Activated CD8-positive, alpha-beta memory T cell treated with anti-CD3 and anti-CD28 coated beads, Interleukin-2, amount 10 ng/mL, durations not matched to agents 7 days and 5 days (primary cell): ENCODE measurements at regions of chr10 and their contacts with region 1.

Region 1: DNA sequence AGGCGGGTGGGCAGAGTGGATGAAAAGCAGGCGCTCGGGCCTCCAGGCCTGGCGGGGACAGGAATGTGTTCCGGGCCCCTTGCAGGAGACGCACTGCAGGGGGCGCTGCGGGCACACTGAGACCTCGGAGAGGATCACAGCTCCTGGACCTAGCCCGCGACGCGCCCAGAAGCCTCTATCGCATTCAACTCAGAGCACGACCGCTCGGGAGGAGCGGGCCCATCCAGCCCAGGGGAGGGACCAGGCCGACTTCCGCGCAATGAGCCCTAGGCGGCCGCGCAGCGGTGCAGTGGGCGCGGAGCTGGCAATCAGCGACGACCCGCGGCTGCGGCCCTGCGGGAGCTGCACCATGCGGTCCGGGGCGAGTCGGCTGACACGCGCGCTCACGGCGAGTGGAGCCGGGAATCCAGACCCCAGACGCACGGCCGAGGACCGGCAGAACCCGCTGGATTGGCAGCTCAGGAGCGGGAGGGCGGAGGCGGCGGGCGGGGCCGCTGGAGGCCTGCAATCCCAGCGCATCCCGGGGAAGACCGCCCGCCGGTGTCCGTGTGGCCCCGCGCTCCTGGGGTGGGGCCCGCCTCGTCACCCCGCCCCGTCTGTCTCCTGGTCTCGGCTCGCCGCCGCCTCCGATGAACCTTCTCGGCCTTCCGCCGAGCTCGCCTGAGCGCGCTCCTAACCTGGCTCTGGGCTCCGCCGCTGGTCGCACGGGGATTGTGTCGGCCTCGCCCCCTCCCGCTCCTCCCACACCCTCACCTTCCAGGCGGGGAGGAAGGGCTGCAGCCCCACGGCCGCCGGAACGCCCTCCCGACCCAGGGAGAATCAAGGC is 33.5 kb upstream of the GRID1 start:
- DNase-seq: peak; percentile 97
- ATAC-seq: peak; percentile 95
- H3K4me3 Mint-ChIP-seq: peak overlapping the region; percentile 79
- H3K27ac Mint-ChIP-seq: peak overlapping the region; percentile 85
- H3K4me1 Mint-ChIP-seq: peaks cover 8% of the 10 kb centered on the region
- H3K27me3 Mint-ChIP-seq: peaks cover 14% of the 10 kb centered on the region

Region 2: DNA sequence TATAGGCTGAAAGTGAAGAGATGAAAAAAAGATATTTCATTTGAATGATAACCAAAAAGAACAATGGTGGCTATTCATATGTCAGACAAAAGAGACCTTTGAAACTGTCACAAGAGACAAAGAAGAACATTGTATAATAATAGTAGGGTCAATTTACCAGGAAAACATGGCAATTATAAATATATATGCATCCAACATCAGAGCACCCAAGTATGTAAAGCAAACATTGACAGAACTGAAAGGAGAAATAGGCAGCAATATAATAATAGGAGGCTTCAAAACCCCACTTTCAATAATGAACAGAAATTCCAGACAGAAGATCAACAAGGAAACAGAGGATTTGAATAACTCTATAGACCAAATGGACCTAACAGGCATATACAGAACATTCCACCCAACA is 909.7 kb before region 1 on chr10:
- CTCF ChIA-PET with region 1: no interaction called
- DNase-seq: no peak
- ATAC-seq: no peak
- H3K4me3 Mint-ChIP-seq: no peak overlapping the region
- H3K27ac Mint-ChIP-seq: no peak overlapping the region
- H3K4me1 Mint-ChIP-seq: peaks cover 3% of the 10 kb centered on the region
- H3K27me3 Mint-ChIP-seq: no peaks in the 10 kb centered on the region

Region 3: GRCh38 chr10:86389441-86390193 is 10.5 kb before region 1 on chr10:
- CTCF ChIA-PET with region 1: interaction called, 14 read pairs
- DNase-seq: peak; percentile 48
- ATAC-seq: peak; percentile 85
- H3K4me3 Mint-ChIP-seq: peak overlapping the region; percentile 72
- H3K27ac Mint-ChIP-seq: no peak overlapping the region
- H3K4me1 Mint-ChIP-seq: peaks cover 3% of the 10 kb centered on the region
- H3K27me3 Mint-ChIP-seq: peaks cover 49% of the 10 kb centered on the region

Region 4: DNA sequence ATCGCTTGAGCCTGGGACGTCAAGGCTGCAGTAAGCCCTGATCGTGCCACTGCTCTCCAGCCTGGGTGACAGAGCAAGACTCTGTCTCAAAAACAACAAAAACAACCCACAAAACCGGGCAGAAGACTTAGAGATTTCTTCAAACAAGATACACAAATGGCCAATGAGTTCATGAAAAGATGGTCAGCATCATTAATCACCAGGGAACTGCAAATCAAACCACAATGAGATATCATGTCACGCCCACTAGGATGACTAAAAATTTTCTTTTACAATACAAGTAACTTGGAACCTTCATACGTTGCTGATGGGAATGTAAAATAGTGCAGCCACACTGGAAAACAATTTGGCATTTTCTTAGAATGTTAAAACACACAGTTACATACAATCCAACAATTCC is 43.8 kb after region 1 on chr10:
- CTCF ChIA-PET with region 1: interaction called, 16 read pairs
- DNase-seq: no peak
- ATAC-seq: no peak
- H3K4me3 Mint-ChIP-seq: no peak overlapping the region
- H3K27ac Mint-ChIP-seq: no peak overlapping the region
- H3K4me1 Mint-ChIP-seq: peaks cover 37% of the 10 kb centered on the region
- H3K27me3 Mint-ChIP-seq: no peaks in the 10 kb centered on the region

Region 5: DNA sequence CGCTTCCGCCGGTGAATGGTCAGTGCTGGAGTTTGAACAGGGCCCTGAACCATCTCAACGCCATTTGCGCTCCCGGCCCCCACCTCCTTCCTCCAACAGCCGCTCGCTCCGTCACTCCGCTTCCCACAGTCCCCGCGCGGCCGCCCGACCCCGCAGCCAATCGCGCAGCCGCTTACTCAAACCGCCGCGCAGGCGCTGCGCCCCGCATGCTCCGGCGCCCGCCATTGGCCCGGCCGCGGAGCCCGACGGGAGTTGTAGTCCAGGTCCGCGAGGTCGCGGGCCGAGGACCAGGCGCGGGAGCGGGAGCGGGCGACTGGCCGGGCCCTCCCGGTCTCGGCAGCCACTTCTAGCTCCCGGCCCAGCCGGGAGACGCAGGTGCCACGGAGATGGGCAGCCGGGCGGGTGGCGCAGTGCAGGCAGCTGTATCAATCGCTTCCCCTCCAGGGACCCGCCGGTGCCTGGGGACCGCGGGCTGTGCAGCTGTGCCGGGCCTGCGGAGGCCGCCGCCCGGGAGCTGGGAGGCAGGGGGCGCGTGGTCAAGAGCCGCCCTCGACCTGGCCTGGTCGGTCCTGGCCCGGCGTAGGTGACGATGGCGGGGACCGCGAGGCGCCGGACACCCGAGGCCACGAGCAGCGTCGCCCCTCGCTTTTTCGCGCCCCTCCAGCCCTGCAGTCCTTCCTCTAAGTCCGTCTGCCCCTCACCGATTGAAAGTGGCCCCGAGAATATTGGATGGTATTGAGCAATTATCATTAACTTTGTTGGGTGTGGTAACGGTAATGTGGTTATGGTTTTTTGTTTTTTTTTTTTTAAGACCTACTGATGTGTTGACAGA is 121.8 kb after region 1 on chr10 and contains the start of gene WAPL:
- CTCF ChIA-PET with region 1: interaction called, 22 read pairs
- DNase-seq: peak; percentile 95
- ATAC-seq: peak; percentile 94
- H3K4me3 Mint-ChIP-seq: peak within 1 kb of the TSS; percentile 85
- H3K27ac Mint-ChIP-seq: peak within 1 kb of the TSS; percentile 89
- H3K4me1 Mint-ChIP-seq: peaks cover 56% of the 10 kb centered on the region
- H3K27me3 Mint-ChIP-seq: no peaks in the 10 kb centered on the region
- total RNA-seq, gene WAPL: 48.5 to 52.6 TPM

Region 6: GRCh38 chr10:86585037-86585725 is 185.1 kb after region 1 on chr10:
- CTCF ChIA-PET with region 1: interaction called, 191 read pairs
- DNase-seq: peak; percentile 79
- ATAC-seq: peak; percentile 94
- H3K4me3 Mint-ChIP-seq: no peak overlapping the region
- H3K27ac Mint-ChIP-seq: no peak overlapping the region
- H3K4me1 Mint-ChIP-seq: peaks cover 2% of the 10 kb centered on the region
- H3K27me3 Mint-ChIP-seq: no peaks in the 10 kb centered on the region

Region 7: GRCh38 chr10:86953747-86954680 is 553.9 kb after region 1 on chr10:
- CTCF ChIA-PET with region 1: no interaction called
- DNase-seq: no peak
- ATAC-seq: no peak
- H3K4me3 Mint-ChIP-seq: no peak overlapping the region
- H3K27ac Mint-ChIP-seq: no peak overlapping the region
- H3K4me1 Mint-ChIP-seq: peaks cover 7% of the 10 kb centered on the region
- H3K27me3 Mint-ChIP-seq: no peaks in the 10 kb centered on the region